Right cardiac atrium (tissue), 5 donors: ENCODE measurements at regions of chr16 and their contacts with region 1.

Region 1: DNA sequence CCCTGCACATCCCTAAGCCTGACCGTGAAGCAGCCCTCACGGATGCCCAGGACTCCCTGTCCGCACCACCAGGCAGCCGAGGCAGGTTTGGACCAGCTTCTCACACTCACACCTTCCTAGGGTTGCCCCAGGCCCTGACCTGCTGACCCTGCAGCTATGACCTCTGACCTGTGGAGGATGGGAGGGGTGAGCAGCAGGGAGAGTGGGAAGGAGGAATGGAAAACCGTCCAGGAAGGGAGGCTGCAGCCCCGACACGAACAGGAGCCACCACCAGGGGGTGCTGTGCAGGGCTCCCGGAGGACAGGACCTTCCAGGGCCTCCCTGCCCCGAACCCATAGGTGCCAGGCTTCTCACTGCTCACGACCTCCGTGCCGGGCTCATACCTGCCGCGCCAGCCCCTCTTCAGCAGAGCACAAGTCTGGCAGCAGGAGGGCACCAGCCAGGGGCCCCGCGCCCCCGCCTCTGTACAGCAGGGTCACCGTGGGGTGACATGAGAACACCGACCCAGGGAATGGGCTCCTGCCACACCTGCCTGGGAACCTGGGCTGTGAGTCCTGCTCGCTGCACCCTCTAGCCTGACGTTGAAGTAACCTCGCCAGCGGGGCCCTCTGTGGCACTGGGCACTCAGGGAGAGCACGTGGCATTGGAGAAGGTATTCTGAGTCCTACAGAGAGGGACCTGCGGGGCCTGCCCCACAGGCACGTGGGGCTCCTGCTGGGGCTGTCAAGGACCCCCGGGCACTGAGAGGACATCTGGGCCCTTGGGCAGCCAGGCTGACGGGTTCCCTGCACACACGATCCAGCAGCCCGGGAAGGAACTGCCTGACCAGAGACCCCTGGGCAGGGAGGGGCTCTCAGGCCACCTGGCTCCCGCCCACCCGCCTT is 37.6 kb downstream of the CTU2 start:
- DNase-seq: peak; percentile 84 to 94 (median 93)
- ATAC-seq: peak; percentile 44 to 61
- H3K4me3 ChIP-seq: no peak overlapping the region
- H3K27ac ChIP-seq: no peak overlapping the region
- H3K4me1 ChIP-seq: no peaks in the 10 kb centered on the region
- H3K27me3 ChIP-seq: no peaks in the 10 kb centered on the region

Region 2: GRCh38 chr16:88785106-88785924 is 41.4 kb after region 1 on chr16 and contains the start of gene PIEZO1:
- intact Hi-C with region 1: loop called (anchors 2 to 5 kb)
- DNase-seq: peak; percentile 76 to 93 (median 92)
- ATAC-seq: peak; percentile 57 to 59
- H3K4me3 ChIP-seq: peak within 1 kb of the TSS; percentile 70
- H3K27ac ChIP-seq: peak within 1 kb of the TSS; percentile 58
- H3K4me1 ChIP-seq: no peaks in the 10 kb centered on the region
- H3K27me3 ChIP-seq: no peaks in the 10 kb centered on the region
- total RNA-seq, gene PIEZO1: 21.7 to 45.6 (median 29.8) TPM

Region 3: GRCh38 chr16:89217388-89218191 is 473.7 kb after region 1 on chr16 and contains the start of gene ZNF778:
- intact Hi-C with region 1: loop called in 1 of 4 experiments (anchors 10 kb)
- DNase-seq: peak; percentile 85 to 95 (median 92)
- ATAC-seq: peak; percentile 96
- H3K4me3 ChIP-seq: peak within 1 kb of the TSS; percentile 83
- H3K27ac ChIP-seq: peak within 1 kb of the TSS; percentile 92
- H3K4me1 ChIP-seq: no peaks in the 10 kb centered on the region
- H3K27me3 ChIP-seq: no peaks in the 10 kb centered on the region
- total RNA-seq, gene ZNF778: 6.6 to 9.0 (median 8.0) TPM